Activated CD8-positive, alpha-beta T cell treated with anti-CD3 and anti-CD28 coated beads for 36 hours (primary cell): ENCODE measurements at regions of chr21 and their contacts with region 1.

Region 1: GRCh38 chr21:25421327-25422028 is 185.8 kb downstream of the MRPL39 start:
- DNase-seq: peak; percentile 84
- ATAC-seq: peak; percentile 94
- H3K4me3 Mint-ChIP-seq: peak overlapping the region; percentile 55
- H3K27ac Mint-ChIP-seq: peak overlapping the region; percentile 89
- H3K4me1 Mint-ChIP-seq: peaks cover 59% of the 10 kb centered on the region
- H3K27me3 Mint-ChIP-seq: no peaks in the 10 kb centered on the region
- CTCF ChIP-seq: peak; percentile 82

Region 2: DNA sequence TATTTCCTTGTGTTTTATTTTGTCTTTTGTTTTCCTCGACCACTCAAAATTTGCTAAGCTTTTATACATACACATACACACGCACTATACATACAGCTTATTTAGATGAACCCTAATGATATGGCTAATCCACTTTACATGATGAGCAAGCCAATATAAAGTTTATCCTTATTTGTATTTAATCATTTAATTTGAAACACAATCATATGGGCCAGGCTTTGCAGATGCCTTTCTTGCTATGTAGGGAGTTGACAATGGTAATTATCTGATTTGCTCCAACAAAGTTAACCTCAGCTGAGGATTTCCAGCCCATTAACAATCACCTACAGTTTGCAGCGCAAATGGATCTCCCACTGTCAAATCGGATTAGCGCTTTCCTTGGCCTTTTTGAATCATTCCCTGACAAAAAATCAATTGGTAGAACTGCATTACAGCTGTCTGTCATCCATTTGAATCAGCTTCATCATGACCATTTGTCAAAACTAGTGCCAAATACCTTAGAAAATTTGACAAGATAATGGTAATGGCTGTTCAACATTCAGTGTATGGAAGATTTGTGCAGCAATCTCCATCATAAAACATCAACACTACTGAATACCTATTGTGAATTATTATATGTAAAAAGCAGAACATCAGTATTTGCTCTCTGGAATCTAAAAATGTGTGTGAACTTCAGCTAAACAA is 166.8 kb before region 1 on chr21:
- CTCF ChIA-PET with region 1: no interaction called
- POLR2A ChIA-PET with region 1: no interaction called
- intact Hi-C with region 1: no loop called
- DNase-seq: no peak
- ATAC-seq: no peak
- H3K4me3 Mint-ChIP-seq: no peak overlapping the region
- H3K27ac Mint-ChIP-seq: no peak overlapping the region
- H3K4me1 Mint-ChIP-seq: no peaks in the 10 kb centered on the region
- H3K27me3 Mint-ChIP-seq: no peaks in the 10 kb centered on the region
- CTCF ChIP-seq: no peak

Region 3: GRCh38 chr21:25457411-25457810 is 35.9 kb after region 1 on chr21:
- CTCF ChIA-PET with region 1: interaction called, 5 read pairs
- POLR2A ChIA-PET with region 1: interaction called, 6 read pairs
- intact Hi-C with region 1: loop called (anchors 2 kb)
- DNase-seq: no peak
- ATAC-seq: peak; percentile 47
- H3K4me3 Mint-ChIP-seq: peak overlapping the region; percentile 69
- H3K27ac Mint-ChIP-seq: peak overlapping the region; percentile 92
- H3K4me1 Mint-ChIP-seq: peaks cover 83% of the 10 kb centered on the region
- H3K27me3 Mint-ChIP-seq: no peaks in the 10 kb centered on the region
- CTCF ChIP-seq: no peak

Region 4: DNA sequence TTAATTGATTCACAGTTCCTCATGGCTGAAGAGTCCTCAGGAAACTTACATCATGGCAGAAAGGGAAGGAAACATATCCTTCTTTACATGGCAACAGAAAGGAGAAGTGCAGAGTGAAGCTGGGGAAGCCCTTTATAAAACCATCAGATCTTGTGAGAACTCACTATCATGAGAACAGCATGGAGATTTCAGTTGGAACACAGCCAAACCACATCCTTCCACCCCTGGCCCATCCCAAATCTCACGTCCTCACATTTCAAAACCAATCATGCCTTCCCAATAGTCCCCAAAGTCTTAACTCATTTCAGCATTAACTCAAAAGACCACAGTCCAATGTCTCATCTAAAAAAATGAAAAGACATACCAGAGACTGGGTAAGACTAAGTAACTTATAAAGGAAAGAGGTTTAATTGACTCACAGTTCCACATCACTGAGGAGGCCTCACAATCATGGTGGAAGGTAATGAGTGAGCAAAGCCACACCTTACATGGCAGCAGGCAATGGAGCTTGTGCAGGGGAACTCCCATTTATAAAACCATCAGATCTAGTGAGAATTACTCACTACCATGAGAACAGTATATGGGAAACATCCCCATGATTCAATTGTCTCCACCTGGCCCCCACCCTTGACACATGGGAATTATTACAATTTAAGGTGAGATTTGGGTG is 80.7 kb after region 1 on chr21:
- CTCF ChIA-PET with region 1: interaction called, 20 read pairs
- POLR2A ChIA-PET with region 1: interaction called, 9 read pairs
- intact Hi-C with region 1: loop called (anchors 5 kb)
- DNase-seq: peak; percentile 79
- ATAC-seq: peak; percentile 92
- H3K4me3 Mint-ChIP-seq: peak overlapping the region; percentile 50
- H3K27ac Mint-ChIP-seq: peak overlapping the region; percentile 99
- H3K4me1 Mint-ChIP-seq: peaks cover 69% of the 10 kb centered on the region
- H3K27me3 Mint-ChIP-seq: no peaks in the 10 kb centered on the region
- CTCF ChIP-seq: no peak

Region 5: DNA sequence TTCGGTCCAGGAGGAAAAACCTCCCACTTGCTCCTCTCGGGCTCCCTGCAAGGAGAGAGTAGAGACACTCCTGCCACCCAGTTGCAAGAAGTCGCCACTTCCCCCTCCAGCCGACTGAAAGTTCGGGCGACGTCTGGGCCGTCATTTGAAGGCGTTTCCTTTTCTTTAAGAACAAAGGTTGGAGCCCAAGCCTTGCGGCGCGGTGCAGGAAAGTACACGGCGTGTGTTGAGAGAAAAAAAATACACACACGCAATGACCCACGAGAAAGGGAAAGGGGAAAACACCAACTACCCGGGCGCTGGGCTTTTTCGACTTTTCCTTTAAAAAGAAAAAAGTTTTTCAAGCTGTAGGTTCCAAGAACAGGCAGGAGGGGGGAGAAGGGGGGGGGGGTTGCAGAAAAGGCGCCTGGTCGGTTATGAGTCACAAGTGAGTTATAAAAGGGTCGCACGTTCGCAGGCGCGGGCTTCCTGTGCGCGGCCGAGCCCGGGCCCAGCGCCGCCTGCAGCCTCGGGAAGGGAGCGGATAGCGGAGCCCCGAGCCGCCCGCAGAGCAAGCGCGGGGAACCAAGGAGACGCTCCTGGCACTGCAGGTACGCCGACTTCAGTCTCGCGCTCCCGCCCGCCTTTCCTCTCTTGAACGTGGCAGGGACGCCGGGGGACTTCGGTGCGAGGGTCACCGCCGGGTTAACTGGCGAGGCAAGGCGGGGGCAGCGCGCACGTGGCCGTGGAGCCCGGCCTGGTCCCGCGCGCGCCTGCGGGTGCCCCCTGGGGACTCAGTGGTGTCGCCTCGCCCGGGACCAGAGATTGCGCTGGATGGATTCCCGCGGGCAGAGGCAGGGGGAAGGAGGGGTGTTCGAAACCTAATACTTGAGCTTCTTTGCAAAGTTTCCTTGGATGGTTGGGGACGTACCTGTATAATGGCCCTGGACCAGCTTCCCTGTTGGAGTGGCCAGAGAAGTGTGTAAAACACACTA is 140.5 kb after region 1 on chr21:
- CTCF ChIA-PET with region 1: interaction called, 14 read pairs
- POLR2A ChIA-PET with region 1: interaction called, 275 read pairs
- intact Hi-C with region 1: loop called (anchors 2 kb)
- DNase-seq: peak; percentile 90
- ATAC-seq: peak; percentile 70
- H3K4me3 Mint-ChIP-seq: peak overlapping the region; percentile 83
- H3K27ac Mint-ChIP-seq: peak overlapping the region; percentile 98
- H3K4me1 Mint-ChIP-seq: peaks cover 42% of the 10 kb centered on the region
- H3K27me3 Mint-ChIP-seq: no peaks in the 10 kb centered on the region
- CTCF ChIP-seq: no peak

Region 6: GRCh38 chr21:25573409-25574206 is 152.1 kb after region 1 on chr21:
- CTCF ChIA-PET with region 1: interaction called, 14 read pairs
- POLR2A ChIA-PET with region 1: interaction called, 275 read pairs
- intact Hi-C with region 1: no loop called
- DNase-seq: peak; percentile 87
- ATAC-seq: peak; percentile 45
- H3K4me3 Mint-ChIP-seq: peak overlapping the region; percentile 83
- H3K27ac Mint-ChIP-seq: peak overlapping the region; percentile 97
- H3K4me1 Mint-ChIP-seq: peaks cover 70% of the 10 kb centered on the region
- H3K27me3 Mint-ChIP-seq: no peaks in the 10 kb centered on the region
- CTCF ChIP-seq: no peak

Region 7: GRCh38 chr21:25708467-25709065 is 287.1 kb after region 1 on chr21:
- CTCF ChIA-PET with region 1: no interaction called
- POLR2A ChIA-PET with region 1: no interaction called
- intact Hi-C with region 1: loop called (anchors 2 kb)
- DNase-seq: peak; percentile 69
- ATAC-seq: peak; percentile 55
- H3K4me3 Mint-ChIP-seq: no peak overlapping the region
- H3K27ac Mint-ChIP-seq: no peak overlapping the region
- H3K4me1 Mint-ChIP-seq: no peaks in the 10 kb centered on the region
- H3K27me3 Mint-ChIP-seq: no peaks in the 10 kb centered on the region
- CTCF ChIP-seq: peak; percentile 90